HEK293 (cell line): ENCODE measurements at regions of chr11 and their contacts with region 1.

Region 1: GRCh38 chr11:94623120-94623735 is 56.1 kb downstream of the PIWIL4 start:
- H3K4me3 ChIP-seq: no peak overlapping the region
- H3K27ac ChIP-seq: no peak overlapping the region
- H3K4me1 ChIP-seq: no peaks in the 10 kb centered on the region
- CTCF ChIP-seq: peak; percentile 81

Region 2: DNA sequence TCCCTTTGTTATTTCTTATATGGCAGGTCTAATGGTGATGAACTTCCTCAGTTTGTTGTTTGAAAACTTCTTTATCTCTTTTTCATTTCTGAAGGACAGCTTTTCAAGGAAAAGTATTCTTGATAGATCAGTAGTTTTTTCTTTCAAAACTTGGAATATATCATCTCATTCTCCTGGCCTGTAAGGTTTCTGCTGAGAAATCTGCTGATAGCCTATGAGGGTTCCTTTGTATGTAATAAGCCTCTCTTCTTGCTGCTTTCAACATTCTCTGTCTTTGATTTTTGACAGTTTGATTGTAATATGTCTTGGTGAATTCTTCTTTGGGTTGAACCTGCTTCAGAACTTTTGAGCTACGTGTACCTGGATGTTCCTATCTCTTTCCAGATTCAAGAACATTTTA is 10.1 kb before region 1 on chr11:
- CTCF ChIA-PET with region 1: interaction called, 22 read pairs
- POLR2A ChIA-PET with region 1: no interaction called
- H3K4me3 ChIP-seq: no peak overlapping the region
- H3K27ac ChIP-seq: no peak overlapping the region
- H3K4me1 ChIP-seq: no peaks in the 10 kb centered on the region
- CTCF ChIP-seq: no peak

Region 3: GRCh38 chr11:94715225-94715624 is 92.0 kb after region 1 on chr11:
- CTCF ChIA-PET with region 1: no interaction called
- POLR2A ChIA-PET with region 1: no interaction called
- H3K4me3 ChIP-seq: no peak overlapping the region
- H3K27ac ChIP-seq: no peak overlapping the region
- H3K4me1 ChIP-seq: no peaks in the 10 kb centered on the region
- CTCF ChIP-seq: no peak

Region 4: GRCh38 chr11:94741022-94741679 is 117.9 kb after region 1 on chr11:
- CTCF ChIA-PET with region 1: interaction called, 48 read pairs
- POLR2A ChIA-PET with region 1: interaction called, 3 read pairs
- H3K4me3 ChIP-seq: peak overlapping the region; percentile 68
- H3K27ac ChIP-seq: peak overlapping the region; percentile 34; the same call in 1 of the 2 replicates
- H3K4me1 ChIP-seq: peaks cover 9% of the 10 kb centered on the region
- CTCF ChIP-seq: peak; percentile 23; the same call in 1 of the 2 replicates

Region 5: DNA sequence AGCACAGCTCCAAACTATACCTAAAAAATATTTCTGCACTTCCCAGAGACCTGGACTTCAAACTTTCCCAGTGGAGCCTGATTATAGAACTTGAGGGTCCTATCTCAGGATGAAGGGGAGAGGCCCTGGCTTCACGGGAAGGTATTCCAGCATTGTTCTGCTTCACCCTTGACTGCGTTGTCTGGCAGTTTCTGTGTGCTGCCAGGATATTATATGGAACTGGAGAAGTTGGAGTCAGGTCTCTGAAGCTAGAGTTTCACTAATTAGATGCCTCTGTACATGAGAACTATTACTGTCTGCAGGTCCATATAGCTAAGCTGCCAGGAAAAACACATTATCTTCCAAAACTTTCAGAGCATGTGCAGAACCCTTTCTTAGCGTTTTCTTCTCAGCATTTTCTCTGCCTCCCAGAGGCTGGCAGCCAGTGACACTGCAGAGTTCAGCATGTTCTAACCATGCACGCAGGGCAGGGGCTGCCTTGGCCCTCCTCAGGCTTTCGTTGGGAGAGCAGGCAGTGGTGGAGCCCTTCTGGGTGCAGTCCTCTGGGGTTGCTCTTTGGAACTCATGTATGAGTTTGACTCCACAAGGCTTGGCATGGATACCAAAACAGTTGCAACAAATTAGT is 250.8 kb after region 1 on chr11:
- CTCF ChIA-PET with region 1: interaction called, 10 read pairs
- POLR2A ChIA-PET with region 1: no interaction called
- H3K4me3 ChIP-seq: no peak overlapping the region
- H3K27ac ChIP-seq: no peak overlapping the region
- H3K4me1 ChIP-seq: no peaks in the 10 kb centered on the region
- CTCF ChIP-seq: no peak

Region 6: GRCh38 chr11:94909371-94909820 is 286.2 kb after region 1 on chr11:
- CTCF ChIA-PET with region 1: interaction called, 10 read pairs
- POLR2A ChIA-PET with region 1: no interaction called
- H3K4me3 ChIP-seq: no peak overlapping the region
- H3K27ac ChIP-seq: no peak overlapping the region
- H3K4me1 ChIP-seq: no peaks in the 10 kb centered on the region
- CTCF ChIP-seq: no peak